Activated CD8-positive, alpha-beta T cell treated with anti-CD3 and anti-CD28 coated beads, Interleukin-2, amount 10 ng/mL, durations not matched to agents 7 days and 5 days (primary cell): ENCODE measurements at regions of chr13 and their contacts with region 1.

Region 1: GRCh38 chr13:30395192-30396084 is 26.9 kb upstream of the UBE2L5 start:
- DNase-seq: peak; percentile 84
- ATAC-seq: peak; percentile 61
- H3K4me3 Mint-ChIP-seq: peak overlapping the region; percentile 79
- H3K27ac Mint-ChIP-seq: peak overlapping the region; percentile 97
- H3K4me1 Mint-ChIP-seq: peaks cover 46% of the 10 kb centered on the region
- H3K27me3 Mint-ChIP-seq: no peaks in the 10 kb centered on the region

Region 2: DNA sequence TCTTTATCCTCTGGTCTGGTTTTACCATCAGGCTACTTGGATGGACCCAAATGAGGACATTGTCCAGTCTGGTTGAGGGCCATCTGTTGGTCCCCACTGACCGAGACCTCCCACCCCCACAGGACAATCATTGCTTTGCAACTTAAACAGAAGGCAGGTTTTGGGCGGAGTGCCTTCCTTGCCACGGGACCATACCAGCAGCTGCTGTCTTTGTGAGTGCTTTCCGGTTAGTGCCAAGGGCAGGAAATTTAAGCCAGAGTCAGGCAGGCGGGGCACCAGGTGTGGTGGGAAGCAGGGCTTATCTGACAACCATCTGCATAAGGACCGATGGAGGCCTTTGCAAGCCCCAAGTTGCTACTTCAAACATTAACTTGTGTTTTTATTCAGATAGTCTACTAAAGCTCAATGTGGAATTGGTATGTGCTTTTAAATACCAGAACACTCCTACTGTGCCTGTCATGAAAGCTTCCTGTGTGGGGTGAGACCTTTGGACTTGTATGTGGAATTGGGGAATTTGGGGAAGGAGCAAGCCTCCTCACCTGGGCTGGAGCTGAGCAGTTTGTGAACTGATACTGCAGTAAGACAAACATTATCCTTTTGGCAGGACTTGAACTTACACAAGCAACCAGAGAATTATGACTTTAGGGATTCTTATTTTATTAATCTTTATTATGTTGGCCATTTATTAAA is 12.5 kb before region 1 on chr13:
- CTCF ChIA-PET with region 1: interaction called, 18 read pairs
- POLR2A ChIA-PET with region 1: interaction called, 94 read pairs
- DNase-seq: no peak
- ATAC-seq: peak; percentile 33
- H3K4me3 Mint-ChIP-seq: no peak overlapping the region
- H3K27ac Mint-ChIP-seq: peak overlapping the region; percentile 46
- H3K4me1 Mint-ChIP-seq: peaks cover 39% of the 10 kb centered on the region
- H3K27me3 Mint-ChIP-seq: no peaks in the 10 kb centered on the region

Region 3: GRCh38 chr13:30408319-30409101 is 13.1 kb after region 1 on chr13:
- CTCF ChIA-PET with region 1: interaction called, 23 read pairs
- POLR2A ChIA-PET with region 1: interaction called, 13 read pairs
- DNase-seq: peak; percentile 93
- ATAC-seq: peak; percentile 97
- H3K4me3 Mint-ChIP-seq: peak overlapping the region; percentile 52
- H3K27ac Mint-ChIP-seq: peak overlapping the region; percentile 55
- H3K4me1 Mint-ChIP-seq: peaks cover 27% of the 10 kb centered on the region
- H3K27me3 Mint-ChIP-seq: peaks cover 10% of the 10 kb centered on the region

Region 4: GRCh38 chr13:30465585-30466357 is 70.3 kb after region 1 on chr13 and contains the start of gene HMGB1:
- CTCF ChIA-PET with region 1: interaction called, 4 read pairs
- POLR2A ChIA-PET with region 1: interaction called, 20 read pairs
- DNase-seq: peak; percentile 99
- ATAC-seq: peak; percentile 95
- H3K4me3 Mint-ChIP-seq: peak within 1 kb of the TSS; percentile 88
- H3K27ac Mint-ChIP-seq: peak within 1 kb of the TSS; percentile 98
- H3K4me1 Mint-ChIP-seq: peaks cover 28% of the 10 kb centered on the region
- H3K27me3 Mint-ChIP-seq: no peaks in the 10 kb centered on the region
- total RNA-seq, gene HMGB1: 650 to 662 TPM